Activated CD4-positive, alpha-beta T cell treated with anti-CD3 and anti-CD28 coated beads for 36 hours (primary cell): ENCODE measurements at regions of chr1 and their contacts with region 1.

Region 1: DNA sequence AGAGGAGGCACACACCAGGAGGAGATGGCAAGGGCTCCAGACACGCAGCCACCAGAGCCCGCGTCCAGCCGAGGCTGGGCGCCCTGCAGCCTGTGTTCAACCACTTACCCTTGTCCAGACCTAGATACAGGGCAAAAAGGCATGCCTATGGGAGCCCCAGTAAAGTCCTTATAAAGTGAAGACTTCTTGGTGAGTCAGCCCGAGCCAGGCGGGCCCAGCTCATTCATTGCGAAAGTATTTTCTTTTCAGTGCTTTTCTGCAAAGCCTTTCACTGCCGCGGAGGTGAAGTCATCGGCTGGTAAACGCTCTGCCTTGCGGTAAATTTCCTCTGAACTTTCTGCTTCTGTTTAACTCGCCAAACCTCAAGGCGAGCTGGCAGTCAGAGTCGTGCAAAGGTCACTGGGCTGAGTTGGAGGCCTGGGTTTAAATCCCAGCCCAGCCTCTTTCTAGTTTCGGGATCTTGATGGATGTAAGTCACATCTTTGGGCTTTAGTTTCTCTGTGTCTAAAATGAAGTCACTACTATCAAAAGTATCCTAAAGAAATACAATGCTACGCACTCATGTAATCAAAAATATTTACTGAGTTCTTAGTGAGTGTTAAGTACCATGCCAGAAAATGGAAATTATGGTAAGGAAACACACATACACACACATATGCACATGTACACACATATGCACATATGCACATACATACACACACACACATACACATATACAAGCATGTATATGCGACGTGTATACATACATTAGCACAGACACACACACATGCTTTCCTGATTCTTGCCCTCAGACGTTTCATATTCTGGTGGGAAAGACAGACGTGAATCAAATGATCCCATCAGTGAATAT is 54.7 kb upstream of the IFFO2 start:
- DNase-seq: peak; percentile 93
- ATAC-seq: peak; percentile 97
- H3K4me3 Mint-ChIP-seq: peak overlapping the region; percentile 12
- H3K27ac Mint-ChIP-seq: peak overlapping the region; percentile 87
- H3K4me1 Mint-ChIP-seq: peaks cover 36% of the 10 kb centered on the region
- H3K27me3 Mint-ChIP-seq: peaks cover 2% of the 10 kb centered on the region

Region 2: GRCh38 chr1:18949686-18950400 is 61.4 kb before region 1 on chr1:
- CTCF ChIA-PET with region 1: interaction called, 5 read pairs
- POLR2A ChIA-PET with region 1: interaction called, 5 read pairs
- intact Hi-C with region 1: loop called (anchors 1 kb)
- DNase-seq: peak; percentile 64
- ATAC-seq: no peak
- H3K4me3 Mint-ChIP-seq: peak overlapping the region; percentile 86
- H3K27ac Mint-ChIP-seq: peak overlapping the region; percentile 92
- H3K4me1 Mint-ChIP-seq: peaks cover 93% of the 10 kb centered on the region
- H3K27me3 Mint-ChIP-seq: no peaks in the 10 kb centered on the region

Region 3: GRCh38 chr1:19074902-19075721 is 63.9 kb after region 1 on chr1:
- CTCF ChIA-PET with region 1: interaction called, 4 read pairs
- POLR2A ChIA-PET with region 1: no interaction called
- intact Hi-C with region 1: loop called in 1 of 2 experiments (anchors 1 kb)
- DNase-seq: no peak
- ATAC-seq: peak; percentile 28
- H3K4me3 Mint-ChIP-seq: no peak overlapping the region
- H3K27ac Mint-ChIP-seq: peak overlapping the region; percentile 11
- H3K4me1 Mint-ChIP-seq: peaks cover 53% of the 10 kb centered on the region
- H3K27me3 Mint-ChIP-seq: no peaks in the 10 kb centered on the region